A673 (cell line): ENCODE measurements at regions of chr14 and their contacts with region 1.

Region 1: GRCh38 chr14:103613517-103613916 is 15.5 kb upstream of the KLC1 start:
- DNase-seq: no peak
- H3K4me3 ChIP-seq: no peak overlapping the region
- H3K27ac ChIP-seq: no peak overlapping the region
- H3K4me1 ChIP-seq: no peaks in the 10 kb centered on the region
- H3K27me3 ChIP-seq: no peaks in the 10 kb centered on the region
- CTCF ChIP-seq: peak; percentile 39

Region 2: GRCh38 chr14:102824832-102825231 is 788.7 kb before region 1 on chr14:
- CTCF ChIA-PET with region 1: no interaction called
- POLR2A ChIA-PET with region 1: no interaction called
- intact Hi-C with region 1: no loop called
- DNase-seq: peak; percentile 26
- H3K4me3 ChIP-seq: no peak overlapping the region
- H3K27ac ChIP-seq: no peak overlapping the region
- H3K4me1 ChIP-seq: peaks cover 14% of the 10 kb centered on the region
- H3K27me3 ChIP-seq: no peaks in the 10 kb centered on the region
- CTCF ChIP-seq: no peak

Region 3: GRCh38 chr14:103581936-103582703 is 31.4 kb before region 1 on chr14:
- CTCF ChIA-PET with region 1: no interaction called
- POLR2A ChIA-PET with region 1: no interaction called
- intact Hi-C with region 1: no loop called
- DNase-seq: no peak
- H3K4me3 ChIP-seq: no peak overlapping the region
- H3K27ac ChIP-seq: no peak overlapping the region
- H3K4me1 ChIP-seq: peaks cover 2% of the 10 kb centered on the region
- H3K27me3 ChIP-seq: no peaks in the 10 kb centered on the region
- CTCF ChIP-seq: no peak

Region 4: GRCh38 chr14:103825101-103825500 is 211.6 kb after region 1 on chr14:
- CTCF ChIA-PET with region 1: no interaction called
- POLR2A ChIA-PET with region 1: interaction called, 10 read pairs
- intact Hi-C with region 1: no loop called
- DNase-seq: no peak
- H3K4me3 ChIP-seq: no peak overlapping the region
- H3K27ac ChIP-seq: no peak overlapping the region
- H3K4me1 ChIP-seq: peaks cover 14% of the 10 kb centered on the region
- H3K27me3 ChIP-seq: no peaks in the 10 kb centered on the region
- CTCF ChIP-seq: no peak

Region 5: GRCh38 chr14:103847451-103848188 is 234.1 kb after region 1 on chr14 and contains the start of gene PPP1R13B:
- CTCF ChIA-PET with region 1: no interaction called
- POLR2A ChIA-PET with region 1: no interaction called
- intact Hi-C with region 1: no loop called
- DNase-seq: peak; percentile 92
- H3K4me3 ChIP-seq: peak within 1 kb of the TSS; percentile 70
- H3K27ac ChIP-seq: peak within 1 kb of the TSS; percentile 47
- H3K4me1 ChIP-seq: peaks cover 5% of the 10 kb centered on the region
- H3K27me3 ChIP-seq: peaks cover 17% of the 10 kb centered on the region
- CTCF ChIP-seq: no peak
- total RNA-seq, gene PPP1R13B: 4.4 and 4.8 TPM in 2 replicates